GM18951 (cell line): ENCODE measurements at regions of chr16 and their contacts with region 1.

Region 1: DNA sequence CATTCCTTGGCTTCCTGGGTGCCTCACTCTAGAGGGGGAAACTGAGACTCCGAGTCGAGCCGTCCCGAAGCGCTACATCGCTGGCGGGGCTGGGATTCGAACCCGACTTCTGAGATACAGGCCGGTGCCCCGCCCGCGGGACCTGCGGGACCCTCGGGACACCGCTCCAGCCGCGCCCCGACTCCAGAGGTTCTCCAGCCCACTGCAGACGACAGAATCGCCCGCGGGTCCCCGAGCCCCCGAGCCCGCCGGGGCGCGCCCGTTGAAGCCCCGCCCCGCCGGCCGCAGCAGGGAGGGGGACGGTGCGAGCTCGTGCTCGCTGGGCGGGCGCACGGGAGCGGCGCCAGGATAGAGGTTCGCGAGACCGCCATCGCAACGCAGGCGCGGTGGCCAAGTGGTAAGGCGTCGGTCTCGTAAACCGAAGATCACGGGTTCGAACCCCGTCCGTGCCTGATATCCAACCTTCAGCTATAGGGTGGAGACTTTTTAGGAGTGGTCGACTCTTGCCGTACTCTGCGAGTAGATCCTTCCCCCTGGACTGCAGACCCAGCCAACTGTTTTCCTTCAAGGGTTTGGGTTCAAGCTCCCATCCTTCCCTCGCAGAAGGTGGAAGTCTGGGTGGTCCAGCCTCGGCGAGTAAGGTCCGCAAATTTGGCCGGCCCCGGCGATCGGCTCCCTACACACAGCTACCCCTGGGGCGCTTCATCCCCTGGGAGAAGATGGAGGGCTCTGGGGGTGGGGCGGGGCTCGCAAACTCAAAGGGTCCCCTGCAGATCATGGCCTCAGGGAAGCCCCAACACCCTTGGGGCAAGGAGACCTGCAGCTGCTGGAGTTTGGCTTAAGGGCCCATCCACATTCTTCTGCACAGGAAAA is 214.6 kb downstream of the MRTFB start:
- POLR2A ChIP-seq: peak; percentile 53

Region 2: GRCh38 chr16:13919683-13920509 is 365.9 kb before region 1 on chr16 and contains the start of gene ERCC4:
- in situ Hi-C with region 1: loop called (anchors 5 kb)
- POLR2A ChIP-seq: peak; percentile 91

Region 3: DNA sequence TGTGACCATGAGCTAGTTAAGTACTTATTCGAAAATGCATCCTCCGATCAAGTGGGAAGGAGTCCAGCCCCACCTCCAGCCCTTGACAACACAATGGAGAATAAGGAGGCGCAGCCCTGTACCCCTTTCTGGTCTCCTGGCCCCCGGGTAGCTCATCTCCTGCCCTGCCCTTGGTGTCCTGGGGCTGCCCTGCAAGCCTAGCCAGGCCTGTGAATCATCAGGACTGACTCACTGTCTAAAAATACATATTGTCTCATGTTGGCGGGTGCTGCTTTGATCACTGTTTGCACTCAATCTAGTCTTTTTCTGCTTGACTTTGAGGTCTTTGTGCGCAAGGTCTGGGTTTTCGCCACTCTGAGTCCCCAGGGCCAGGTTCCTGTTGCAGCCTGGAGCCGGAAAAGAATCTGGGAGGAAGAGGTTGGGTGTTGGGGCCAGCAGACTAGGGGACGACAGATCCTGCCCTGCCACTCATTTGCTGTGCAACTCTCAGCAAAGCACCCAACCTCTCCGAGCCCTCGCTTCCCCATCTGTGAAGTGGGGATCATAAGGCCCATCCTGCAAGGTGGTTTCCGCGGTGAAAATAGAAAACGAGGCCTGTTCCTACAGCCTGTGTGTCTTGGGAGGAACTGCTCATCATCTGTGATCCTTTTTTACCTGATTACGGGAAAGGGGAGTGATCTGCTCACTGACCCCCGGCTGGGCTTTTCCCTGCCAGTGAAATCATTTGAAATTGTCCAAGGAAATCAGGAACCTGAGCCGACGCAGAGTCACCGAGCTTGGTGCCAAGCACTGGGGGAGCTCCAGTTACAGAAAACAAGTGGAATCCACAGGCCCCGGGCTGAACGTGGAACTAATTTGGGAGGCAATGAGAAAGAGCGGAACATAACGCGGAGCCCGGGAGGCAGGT is 113.9 kb after region 1 on chr16:
- in situ Hi-C with region 1: no loop called
- POLR2A ChIP-seq: no peak

Region 4: GRCh38 chr16:14529010-14529669 is 243.4 kb after region 1 on chr16:
- in situ Hi-C with region 1: loop called (anchors 10 kb)
- POLR2A ChIP-seq: no peak

Region 5: GRCh38 chr16:14608111-14608566 is 322.4 kb after region 1 on chr16:
- in situ Hi-C with region 1: no loop called
- POLR2A ChIP-seq: no peak